ENCODE measurements at regions of chr16 and their contacts with region 1.

Region 1: GRCh38 chr16:56513972-56514371 is 5.9 kb downstream of the BBS2 start:
- DNase-seq: peak; percentile 74
- H3K4me3 ChIP-seq: no peak overlapping the region
- H3K27ac ChIP-seq: no peak overlapping the region
- H3K4me1 ChIP-seq: peaks cover 3% of the 10 kb centered on the region
- CTCF ChIP-seq: peak; percentile 97

Region 2: DNA sequence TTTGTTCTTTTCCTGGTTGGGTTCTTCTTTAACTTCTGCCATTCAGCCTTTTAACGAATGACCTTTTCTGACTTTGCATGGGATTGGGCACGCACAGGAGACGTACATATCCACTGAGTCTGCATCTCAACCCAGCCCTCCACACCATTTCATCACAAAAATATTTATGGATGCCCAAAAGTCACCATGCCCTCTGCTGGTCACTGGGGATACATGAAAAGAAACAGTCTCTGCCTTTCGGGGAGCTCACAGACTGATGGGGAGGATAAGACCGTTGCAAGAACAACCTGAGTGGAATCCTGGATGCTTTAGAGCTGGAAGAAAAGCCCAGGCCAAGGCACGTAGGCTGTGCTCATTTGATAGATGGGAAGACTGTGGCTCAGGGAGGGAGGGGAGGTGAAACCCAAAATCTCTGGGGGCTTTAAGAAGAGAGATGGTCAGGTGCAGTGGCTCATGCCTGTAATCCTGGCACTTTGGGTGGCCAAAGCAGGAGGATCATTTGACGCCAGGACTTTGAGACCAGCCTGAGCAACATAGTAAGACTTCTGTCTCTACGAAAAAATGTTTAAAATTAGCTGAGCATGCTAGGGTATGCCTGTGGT is 86.5 kb after region 1 on chr16:
- CTCF ChIA-PET with region 1: no interaction called
- POLR2A ChIA-PET with region 1: no interaction called
- intact Hi-C with region 1: loop called (anchors 1 kb)
- DNase-seq: peak; percentile 58
- H3K4me3 ChIP-seq: no peak overlapping the region
- H3K27ac ChIP-seq: no peak overlapping the region
- H3K4me1 ChIP-seq: peaks cover 11% of the 10 kb centered on the region
- CTCF ChIP-seq: peak; percentile 82

Region 3: GRCh38 chr16:56729735-56730662 is 216.0 kb after region 1 on chr16 and contains the start of gene NUP93:
- CTCF ChIA-PET with region 1: no interaction called
- POLR2A ChIA-PET with region 1: no interaction called
- intact Hi-C with region 1: no loop called
- DNase-seq: peak; percentile 95
- H3K4me3 ChIP-seq: peak within 1 kb of the TSS; percentile 92
- H3K27ac ChIP-seq: peak within 1 kb of the TSS; percentile 40
- H3K4me1 ChIP-seq: peaks cover 50% of the 10 kb centered on the region
- CTCF ChIP-seq: peak; percentile 52
- total RNA-seq, gene NUP93: 119 and 120 TPM in 2 replicates

Measured in OCI-LY7 (cell line).